B cell (primary cell): ENCODE measurements at regions of chr5 and their contacts with region 1.

Region 1: GRCh38 chr5:36978196-36978595 is 101.6 kb downstream of the NIPBL start:
- DNase-seq: no peak
- ATAC-seq: no peak
- H3K4me3 ChIP-seq: no peak overlapping the region
- H3K4me3 Mint-ChIP-seq: no peak overlapping the region
- H3K27ac ChIP-seq: no peak overlapping the region
- H3K27ac Mint-ChIP-seq: no peak overlapping the region
- H3K4me1 ChIP-seq: no peaks in the 10 kb centered on the region
- H3K4me1 Mint-ChIP-seq: peaks cover 12% of the 10 kb centered on the region
- H3K27me3 ChIP-seq: no peaks in the 10 kb centered on the region
- H3K27me3 Mint-ChIP-seq: no peaks in the 10 kb centered on the region
- CTCF ChIP-seq: no peak

Region 2: GRCh38 chr5:36988396-36988795 is 10.2 kb after region 1 on chr5:
- CTCF ChIA-PET with region 1: no interaction called
- POLR2A ChIA-PET with region 1: no interaction called
- intact Hi-C with region 1: loop called (anchors 2 kb)
- DNase-seq: no peak
- ATAC-seq: no peak
- H3K4me3 ChIP-seq: no peak overlapping the region
- H3K4me3 Mint-ChIP-seq: no peak overlapping the region
- H3K27ac ChIP-seq: no peak overlapping the region
- H3K27ac Mint-ChIP-seq: no peak overlapping the region
- H3K4me1 ChIP-seq: no peaks in the 10 kb centered on the region
- H3K4me1 Mint-ChIP-seq: peaks cover 5% of the 10 kb centered on the region
- H3K27me3 ChIP-seq: no peaks in the 10 kb centered on the region
- H3K27me3 Mint-ChIP-seq: no peaks in the 10 kb centered on the region
- CTCF ChIP-seq: no peak

Region 3: DNA sequence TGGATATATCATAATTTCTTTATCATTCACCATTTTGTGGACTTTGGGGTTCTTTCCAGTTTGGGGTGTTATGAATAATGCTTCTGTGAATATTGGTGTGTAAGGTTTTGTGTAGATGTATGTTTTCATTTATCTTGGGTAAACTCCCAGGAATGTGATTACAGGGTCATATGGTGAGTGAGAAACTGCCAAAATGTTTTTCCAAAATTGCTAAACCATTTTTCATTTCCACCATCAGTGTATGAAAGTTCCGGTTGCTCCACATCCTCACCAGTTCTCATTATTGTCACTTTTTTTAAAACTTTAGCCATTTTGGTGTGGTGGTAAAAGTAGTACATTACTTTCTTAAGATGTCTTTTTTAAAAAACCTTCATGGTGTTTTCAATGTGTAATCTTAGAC is 51.2 kb after region 1 on chr5:
- CTCF ChIA-PET with region 1: no interaction called
- POLR2A ChIA-PET with region 1: no interaction called
- intact Hi-C with region 1: loop called (anchors 10 kb)
- DNase-seq: no peak
- ATAC-seq: no peak
- H3K4me3 ChIP-seq: no peak overlapping the region
- H3K4me3 Mint-ChIP-seq: no peak overlapping the region
- H3K27ac ChIP-seq: no peak overlapping the region
- H3K27ac Mint-ChIP-seq: no peak overlapping the region
- H3K4me1 ChIP-seq: no peaks in the 10 kb centered on the region
- H3K4me1 Mint-ChIP-seq: no peaks in the 10 kb centered on the region
- H3K27me3 ChIP-seq: no peaks in the 10 kb centered on the region
- H3K27me3 Mint-ChIP-seq: no peaks in the 10 kb centered on the region
- CTCF ChIP-seq: no peak